Gastrocnemius medialis (tissue), 4 donors: ENCODE measurements at regions of chr3 and their contacts with region 1.

Region 1: GRCh38 chr3:79521238-79521848 is 246.5 kb downstream of the ROBO1 start:
- DNase-seq: no peak
- ATAC-seq: no peak
- H3K4me3 ChIP-seq: no peak overlapping the region
- H3K27ac ChIP-seq: no peak overlapping the region
- H3K4me1 ChIP-seq: no peaks in the 10 kb centered on the region
- H3K27me3 ChIP-seq: no peaks in the 10 kb centered on the region
- CTCF ChIP-seq: peak in 3 of 5 experiments; percentile 26 to 53 (median 37)
- POLR2A ChIP-seq: no peak

Region 2: GRCh38 chr3:79383402-79384012 is 137.8 kb before region 1 on chr3:
- in situ Hi-C with region 1: no loop called
- intact Hi-C with region 1: no loop called
- DNase-seq: no peak
- ATAC-seq: no peak
- H3K4me3 ChIP-seq: no peak overlapping the region
- H3K27ac ChIP-seq: no peak overlapping the region
- H3K4me1 ChIP-seq: no peaks in the 10 kb centered on the region
- H3K27me3 ChIP-seq: no peaks in the 10 kb centered on the region
- CTCF ChIP-seq: no peak
- POLR2A ChIP-seq: no peak

Region 3: GRCh38 chr3:79846148-79846933 is 325.0 kb after region 1 on chr3:
- in situ Hi-C with region 1: no loop called
- intact Hi-C with region 1: loop called (anchors 10 kb)
- DNase-seq: no peak
- ATAC-seq: no peak
- H3K4me3 ChIP-seq: no peak overlapping the region
- H3K27ac ChIP-seq: no peak overlapping the region
- H3K4me1 ChIP-seq: no peaks in the 10 kb centered on the region
- H3K27me3 ChIP-seq: no peaks in the 10 kb centered on the region
- CTCF ChIP-seq: peak in 1 of 5 experiments; percentile 16
- POLR2A ChIP-seq: no peak

Region 4: DNA sequence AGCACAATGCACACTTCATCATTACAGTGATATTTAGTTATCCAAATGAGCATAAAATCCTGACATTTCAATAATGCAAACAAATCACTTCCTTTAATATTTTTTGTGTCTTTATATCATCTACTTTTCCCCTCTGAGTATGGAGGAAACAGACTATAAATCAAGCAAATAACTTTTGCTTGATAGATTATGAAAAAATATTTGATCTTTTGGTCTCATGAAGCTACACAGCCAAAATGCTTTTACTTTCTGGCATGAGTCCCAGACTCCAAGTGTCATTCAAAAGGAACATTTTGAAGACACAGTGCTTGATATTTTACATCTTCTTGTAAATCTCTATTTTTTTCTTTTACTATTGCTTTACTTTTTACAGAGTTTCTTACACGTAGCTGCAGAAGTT is 461.8 kb after region 1 on chr3:
- in situ Hi-C with region 1: no loop called
- intact Hi-C with region 1: no loop called
- DNase-seq: no peak
- ATAC-seq: no peak
- H3K4me3 ChIP-seq: no peak overlapping the region
- H3K27ac ChIP-seq: no peak overlapping the region
- H3K4me1 ChIP-seq: no peaks in the 10 kb centered on the region
- H3K27me3 ChIP-seq: no peaks in the 10 kb centered on the region
- CTCF ChIP-seq: no peak
- POLR2A ChIP-seq: no peak

Region 5: GRCh38 chr3:80023010-80023409 is 501.7 kb after region 1 on chr3:
- in situ Hi-C with region 1: no loop called
- intact Hi-C with region 1: no loop called
- DNase-seq: no peak
- ATAC-seq: no peak
- H3K4me3 ChIP-seq: no peak overlapping the region
- H3K27ac ChIP-seq: no peak overlapping the region
- H3K4me1 ChIP-seq: no peaks in the 10 kb centered on the region
- H3K27me3 ChIP-seq: no peaks in the 10 kb centered on the region
- CTCF ChIP-seq: no peak
- POLR2A ChIP-seq: no peak